HepG2 (cell line): ENCODE measurements at regions of chr19 and their contacts with region 1.

Region 1: DNA sequence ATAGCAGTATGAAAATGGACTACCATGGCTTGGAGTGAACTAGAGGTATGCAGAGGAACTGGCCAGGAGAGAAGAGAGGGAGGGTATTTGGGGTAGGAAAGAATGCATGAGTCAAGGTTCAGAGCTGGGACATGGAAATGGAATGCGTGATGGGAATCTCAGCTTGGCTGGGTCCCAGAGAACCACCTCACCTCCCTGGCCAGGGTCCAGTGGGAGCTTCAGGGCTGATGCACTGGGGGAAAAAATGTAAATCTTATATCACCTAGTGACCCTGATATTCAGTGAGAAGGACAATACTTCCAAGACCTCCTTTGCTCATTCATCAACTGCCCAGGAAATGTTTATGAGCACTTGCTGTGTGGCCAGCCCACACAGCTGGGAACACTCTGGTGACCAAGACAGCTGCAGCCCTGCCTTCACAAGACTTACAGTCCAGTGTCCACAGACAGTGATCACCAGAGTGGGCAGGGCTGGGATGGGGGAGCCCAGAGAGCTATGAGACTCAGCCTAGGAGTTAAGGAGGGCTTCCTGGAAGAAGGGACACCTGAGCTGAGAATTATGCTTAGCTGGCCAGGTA is 12.8 kb downstream of the IGSF23 start:
- DNase-seq: peak; percentile 89
- ATAC-seq: peak; percentile 83
- H3K4me3 ChIP-seq: no peak overlapping the region
- H3K27ac ChIP-seq: peak overlapping the region; percentile 69
- H3K4me1 ChIP-seq: peaks cover 57% of the 10 kb centered on the region
- H3K27me3 ChIP-seq: no peaks in the 10 kb centered on the region
- CTCF ChIP-seq: no peak
- EP300 ChIP-seq: no peak
- POLR2A ChIP-seq: no peak
- RAD21 ChIP-seq: no peak

Region 2: GRCh38 chr19:44643605-44644401 is 17.7 kb after region 1 on chr19 and contains the start of gene PVR:
- CTCF ChIA-PET with region 1: no interaction called
- POLR2A ChIA-PET with region 1: interaction called, 12 read pairs
- in situ Hi-C with region 1: no loop called
- intact Hi-C with region 1: no loop called
- DNase-seq: peak; percentile 50
- ATAC-seq: peak; percentile 92
- H3K4me3 ChIP-seq: peak within 1 kb of the TSS; percentile 74 to 81 (median 79)
- H3K27ac ChIP-seq: peak within 1 kb of the TSS; percentile 82
- H3K4me1 ChIP-seq: peaks cover 60% of the 10 kb centered on the region
- H3K27me3 ChIP-seq: no peaks in the 10 kb centered on the region; a peak in 1 of 5 replicates
- CTCF ChIP-seq: peak; percentile 35
- EP300 ChIP-seq: no peak
- POLR2A ChIP-seq: peak; percentile 73 to 85
- RAD21 ChIP-seq: peak; percentile 64; the same call in 1 of the 2 replicates
- total RNA-seq, gene PVR: 18.4 and 43.4 TPM in 2 replicates

Region 3: DNA sequence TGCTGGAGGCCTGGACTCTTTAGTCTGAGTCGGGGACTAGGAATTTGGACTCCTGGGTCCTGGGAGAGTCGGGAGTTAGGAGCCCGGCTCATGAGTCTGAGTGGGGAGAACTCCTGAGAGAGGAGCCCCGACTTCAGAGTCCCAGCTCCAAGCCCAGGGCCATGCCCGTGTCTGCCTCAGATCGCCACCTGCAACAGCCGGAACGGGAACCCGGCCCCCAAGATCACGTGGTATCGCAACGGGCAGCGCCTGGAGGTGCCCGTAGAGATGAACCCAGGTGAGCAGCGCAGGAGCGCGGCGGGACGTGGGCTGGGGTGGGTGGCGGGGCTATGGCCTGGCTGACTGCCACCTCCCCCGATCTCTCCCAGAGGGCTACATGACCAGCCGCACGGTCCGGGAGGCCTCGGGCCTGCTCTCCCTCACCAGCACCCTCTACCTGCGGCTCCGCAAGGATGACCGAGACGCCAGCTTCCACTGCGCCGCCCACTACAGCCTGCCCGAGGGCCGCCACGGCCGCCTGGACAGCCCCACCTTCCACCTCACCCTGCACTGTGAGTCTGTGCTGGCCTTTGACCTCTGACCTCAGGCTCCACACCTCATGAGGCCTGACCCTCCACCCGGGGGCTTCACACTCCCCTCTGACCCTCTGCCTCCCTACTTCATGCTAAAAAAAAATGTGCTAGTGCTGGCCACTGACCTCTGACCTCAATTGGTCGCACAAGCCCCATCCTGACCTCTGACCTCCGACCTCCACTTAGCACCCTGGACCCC is 187.1 kb after region 1 on chr19:
- CTCF ChIA-PET with region 1: no interaction called
- POLR2A ChIA-PET with region 1: no interaction called
- in situ Hi-C with region 1: no loop called
- intact Hi-C with region 1: no loop called
- DNase-seq: no peak
- ATAC-seq: no peak
- H3K4me3 ChIP-seq: no peak overlapping the region
- H3K27ac ChIP-seq: peak overlapping the region; percentile 67
- H3K4me1 ChIP-seq: peaks cover 60% of the 10 kb centered on the region
- H3K27me3 ChIP-seq: no peaks in the 10 kb centered on the region; a peak in 1 of 5 replicates
- CTCF ChIP-seq: no peak
- EP300 ChIP-seq: no peak
- POLR2A ChIP-seq: no peak
- RAD21 ChIP-seq: no peak